CD4-positive, alpha-beta T cell (primary cell): ENCODE measurements at regions of chrX and their contacts with region 1.

Region 1: GRCh38 chrX:81121513-81122382 is 80.0 kb downstream of the HMGN5 start:
- DNase-seq: peak; percentile 72 to 92 (median 82)
- ATAC-seq: peak; percentile 92
- H3K4me3 ChIP-seq: peak overlapping the region; percentile 63
- H3K4me3 Mint-ChIP-seq: peak overlapping the region; percentile 92
- H3K27ac ChIP-seq: no peak overlapping the region
- H3K27ac Mint-ChIP-seq: peak overlapping the region; percentile 62
- H3K4me1 ChIP-seq: peaks cover 6% of the 10 kb centered on the region
- H3K4me1 Mint-ChIP-seq: peaks cover 9% of the 10 kb centered on the region
- H3K27me3 ChIP-seq: no peaks in the 10 kb centered on the region
- H3K27me3 Mint-ChIP-seq: no peaks in the 10 kb centered on the region
- CTCF ChIP-seq: no peak

Region 2: GRCh38 chrX:80808160-80808735 is 313.5 kb before region 1 on chrX:
- CTCF ChIA-PET with region 1: no interaction called
- POLR2A ChIA-PET with region 1: no interaction called
- intact Hi-C with region 1: loop called (anchors 2 to 5 kb)
- DNase-seq: peak; percentile 51 to 91 (median 71)
- ATAC-seq: peak; percentile 59
- H3K4me3 ChIP-seq: peak overlapping the region; percentile 74
- H3K4me3 Mint-ChIP-seq: peak overlapping the region; percentile 94
- H3K27ac ChIP-seq: peak overlapping the region; percentile 87 to 90
- H3K27ac Mint-ChIP-seq: peak overlapping the region; percentile 97
- H3K4me1 ChIP-seq: peaks cover 6% of the 10 kb centered on the region
- H3K4me1 Mint-ChIP-seq: peaks cover 38% of the 10 kb centered on the region
- H3K27me3 ChIP-seq: no peaks in the 10 kb centered on the region
- H3K27me3 Mint-ChIP-seq: peaks cover 10% of the 10 kb centered on the region
- CTCF ChIP-seq: no peak

Region 3: DNA sequence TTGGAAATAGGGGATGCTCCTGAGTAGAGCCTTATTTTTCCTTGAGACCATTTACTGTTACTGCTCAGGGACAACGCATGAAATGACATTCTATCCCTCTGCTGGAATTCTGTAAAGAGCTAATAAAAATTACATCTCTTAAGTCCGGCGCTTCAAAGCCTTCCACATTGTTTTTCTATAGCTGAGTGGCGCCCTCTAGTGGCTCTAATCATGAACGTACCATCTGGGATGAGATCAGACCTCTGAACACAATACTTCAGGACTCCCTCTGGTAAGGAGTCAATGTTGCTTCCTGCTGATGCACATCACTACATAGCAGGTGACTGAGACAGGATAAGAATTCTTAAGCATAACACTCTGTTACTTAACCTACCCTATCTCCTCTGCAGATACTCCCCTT is 74.0 kb after region 1 on chrX:
- CTCF ChIA-PET with region 1: interaction called, 3 read pairs
- POLR2A ChIA-PET with region 1: interaction called, 6 read pairs
- intact Hi-C with region 1: loop called in 1 of 2 experiments (anchors 2 kb)
- DNase-seq: peak; percentile 25 to 76 (median 41)
- ATAC-seq: peak; percentile 82
- H3K4me3 ChIP-seq: no peak overlapping the region
- H3K4me3 Mint-ChIP-seq: no peak overlapping the region
- H3K27ac ChIP-seq: no peak overlapping the region
- H3K27ac Mint-ChIP-seq: no peak overlapping the region
- H3K4me1 ChIP-seq: no peaks in the 10 kb centered on the region
- H3K4me1 Mint-ChIP-seq: peaks cover 11% of the 10 kb centered on the region
- H3K27me3 ChIP-seq: no peaks in the 10 kb centered on the region
- H3K27me3 Mint-ChIP-seq: no peaks in the 10 kb centered on the region
- CTCF ChIP-seq: peak; percentile 64

Region 4: DNA sequence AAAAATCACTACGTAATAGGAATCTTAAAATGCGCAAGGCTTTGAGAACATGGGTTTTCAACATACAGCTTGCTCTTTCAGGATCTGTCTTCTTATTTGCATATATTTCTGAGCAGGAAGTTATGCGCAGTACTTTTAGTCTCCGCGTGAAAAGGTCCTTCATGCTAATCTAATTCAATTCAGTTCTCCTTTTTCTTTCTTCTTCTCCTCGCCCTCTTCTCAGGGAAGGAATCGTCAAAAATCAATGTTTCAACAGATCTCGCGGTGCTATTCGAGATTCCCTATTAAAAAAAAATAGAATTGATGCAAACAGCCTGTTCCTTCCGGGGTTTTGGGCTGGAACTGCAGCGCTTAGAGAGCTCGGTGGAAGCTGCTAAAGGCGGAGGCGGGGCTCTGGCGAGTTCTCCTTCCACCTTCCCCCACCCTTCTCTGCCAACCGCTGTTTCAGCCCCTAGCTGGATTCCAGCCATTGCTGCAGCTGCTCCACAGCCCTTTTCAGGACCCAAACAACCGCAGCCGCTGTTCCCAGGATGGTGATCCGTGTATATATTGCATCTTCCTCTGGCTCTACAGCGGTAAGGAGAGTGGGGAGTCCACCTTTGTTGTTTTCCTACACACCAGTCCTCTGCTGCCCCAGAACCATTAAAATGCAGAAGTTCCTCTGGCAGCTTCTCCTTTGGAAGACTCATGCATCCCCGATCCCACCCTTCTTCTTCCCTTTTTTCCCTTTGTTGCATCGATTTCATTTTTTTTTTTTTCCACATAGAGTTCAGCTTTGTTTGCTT is 80.1 kb after region 1 on chrX and contains the starts of genes HMGN5 and SH3BGRL:
- CTCF ChIA-PET with region 1: interaction called, 3 read pairs
- POLR2A ChIA-PET with region 1: interaction called, 6 read pairs
- intact Hi-C with region 1: loop called (anchors 1 to 2 kb)
- DNase-seq: peak; percentile 47 to 86 (median 60)
- ATAC-seq: peak; percentile 94
- H3K4me3 ChIP-seq: peak within 1 kb of the TSS; percentile 75
- H3K4me3 Mint-ChIP-seq: peak within 1 kb of the TSS; percentile 100
- H3K27ac ChIP-seq: peak within 1 kb of the TSS; percentile 69 to 73
- H3K27ac Mint-ChIP-seq: peak within 1 kb of the TSS; percentile 97
- H3K4me1 ChIP-seq: peaks cover 3% of the 10 kb centered on the region
- H3K4me1 Mint-ChIP-seq: peaks cover 58% of the 10 kb centered on the region
- H3K27me3 ChIP-seq: no peaks in the 10 kb centered on the region
- H3K27me3 Mint-ChIP-seq: no peaks in the 10 kb centered on the region
- CTCF ChIP-seq: no peak
- total RNA-seq, gene HMGN5: 1.0 to 1.5 TPM
- total RNA-seq, gene SH3BGRL: 41.7 to 41.8 TPM